ENCODE measurements at regions of chr19 and their contacts with region 1.

Region 1: GRCh38 chr19:37655689-37656371 is 565 bp upstream of the ZFP30 start:
- DNase-seq: peak; percentile 90
- H3K4me3 Mint-ChIP-seq: peak overlapping the region; percentile 91
- H3K27ac Mint-ChIP-seq: peak overlapping the region; percentile 95
- H3K4me1 Mint-ChIP-seq: peaks cover 27% of the 10 kb centered on the region
- H3K27me3 Mint-ChIP-seq: no peaks in the 10 kb centered on the region

Region 2: GRCh38 chr19:37572203-37572602 is 83.6 kb before region 1 on chr19:
- CTCF ChIA-PET with region 1: no interaction called
- POLR2A ChIA-PET with region 1: no interaction called
- intact Hi-C with region 1: no loop called
- DNase-seq: no peak
- H3K4me3 Mint-ChIP-seq: no peak overlapping the region
- H3K27ac Mint-ChIP-seq: no peak overlapping the region
- H3K4me1 Mint-ChIP-seq: no peaks in the 10 kb centered on the region
- H3K27me3 Mint-ChIP-seq: no peaks in the 10 kb centered on the region

Region 3: DNA sequence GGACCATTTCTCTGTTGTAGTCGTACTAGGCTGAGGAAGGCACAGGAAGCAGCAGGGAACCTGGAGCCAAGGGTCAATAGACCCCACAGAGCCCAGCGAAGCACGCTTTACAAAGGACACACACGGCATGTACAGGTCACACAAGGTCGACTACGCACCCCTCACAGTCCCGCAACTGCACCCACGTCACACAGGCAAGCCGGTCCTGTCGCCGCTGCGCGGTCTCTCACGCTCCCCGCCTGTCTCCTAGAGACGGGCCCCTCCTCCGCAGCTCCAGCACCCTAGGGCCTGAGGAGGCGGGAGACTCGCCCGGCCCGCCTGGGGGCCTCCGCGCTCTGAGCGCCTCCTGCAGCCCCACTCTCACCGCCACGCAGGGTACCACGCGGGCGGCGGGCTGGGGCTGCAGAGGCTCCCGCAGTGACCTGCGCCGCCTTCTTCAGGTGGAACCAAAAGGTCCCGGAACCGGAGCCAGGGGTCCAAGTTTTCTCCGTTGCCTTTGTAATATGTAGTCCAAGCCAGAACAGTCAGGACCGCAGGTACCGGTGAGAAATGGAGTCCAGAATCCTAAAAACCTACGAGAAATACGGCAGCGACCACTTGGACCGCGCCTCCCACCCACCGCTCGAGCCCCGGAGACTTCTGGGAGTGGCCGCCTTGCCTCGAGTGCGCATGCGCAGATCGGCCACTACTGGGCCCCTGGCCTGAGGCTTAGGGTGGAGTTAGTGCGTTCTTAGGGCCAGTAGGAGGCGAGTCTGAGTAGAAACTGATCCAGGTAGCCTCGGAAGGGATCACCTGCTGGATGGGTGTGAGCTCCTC is 63.5 kb after region 1 on chr19 and contains the start of gene ZNF607:
- CTCF ChIA-PET with region 1: interaction called, 3 read pairs
- POLR2A ChIA-PET with region 1: no interaction called
- intact Hi-C with region 1: loop called (anchors 1 kb)
- DNase-seq: peak; percentile 92
- H3K4me3 Mint-ChIP-seq: peak within 1 kb of the TSS; percentile 89
- H3K27ac Mint-ChIP-seq: peak within 1 kb of the TSS; percentile 82
- H3K4me1 Mint-ChIP-seq: peaks cover 13% of the 10 kb centered on the region
- H3K27me3 Mint-ChIP-seq: no peaks in the 10 kb centered on the region
- total RNA-seq, gene ZNF607: 5.3 to 7.0 TPM

Region 4: GRCh38 chr19:37803250-37803854 is 147.5 kb after region 1 on chr19:
- CTCF ChIA-PET with region 1: no interaction called
- POLR2A ChIA-PET with region 1: no interaction called
- intact Hi-C with region 1: no loop called
- DNase-seq: no peak
- H3K4me3 Mint-ChIP-seq: no peak overlapping the region
- H3K27ac Mint-ChIP-seq: no peak overlapping the region
- H3K4me1 Mint-ChIP-seq: no peaks in the 10 kb centered on the region
- H3K27me3 Mint-ChIP-seq: no peaks in the 10 kb centered on the region

Measured in activated CD4-positive, alpha-beta memory T cell treated with anti-CD3 and anti-CD28 coated beads for 36 hours (primary cell).